ENCODE measurements at regions of chr2 and their contacts with region 1.

Region 1: GRCh38 chr2:235766278-235766677 is 272.4 kb downstream of the AGAP1 start:
- DNase-seq: no peak
- H3K4me3 ChIP-seq: no peak overlapping the region
- CTCF ChIP-seq: peak; percentile 63

Region 2: DNA sequence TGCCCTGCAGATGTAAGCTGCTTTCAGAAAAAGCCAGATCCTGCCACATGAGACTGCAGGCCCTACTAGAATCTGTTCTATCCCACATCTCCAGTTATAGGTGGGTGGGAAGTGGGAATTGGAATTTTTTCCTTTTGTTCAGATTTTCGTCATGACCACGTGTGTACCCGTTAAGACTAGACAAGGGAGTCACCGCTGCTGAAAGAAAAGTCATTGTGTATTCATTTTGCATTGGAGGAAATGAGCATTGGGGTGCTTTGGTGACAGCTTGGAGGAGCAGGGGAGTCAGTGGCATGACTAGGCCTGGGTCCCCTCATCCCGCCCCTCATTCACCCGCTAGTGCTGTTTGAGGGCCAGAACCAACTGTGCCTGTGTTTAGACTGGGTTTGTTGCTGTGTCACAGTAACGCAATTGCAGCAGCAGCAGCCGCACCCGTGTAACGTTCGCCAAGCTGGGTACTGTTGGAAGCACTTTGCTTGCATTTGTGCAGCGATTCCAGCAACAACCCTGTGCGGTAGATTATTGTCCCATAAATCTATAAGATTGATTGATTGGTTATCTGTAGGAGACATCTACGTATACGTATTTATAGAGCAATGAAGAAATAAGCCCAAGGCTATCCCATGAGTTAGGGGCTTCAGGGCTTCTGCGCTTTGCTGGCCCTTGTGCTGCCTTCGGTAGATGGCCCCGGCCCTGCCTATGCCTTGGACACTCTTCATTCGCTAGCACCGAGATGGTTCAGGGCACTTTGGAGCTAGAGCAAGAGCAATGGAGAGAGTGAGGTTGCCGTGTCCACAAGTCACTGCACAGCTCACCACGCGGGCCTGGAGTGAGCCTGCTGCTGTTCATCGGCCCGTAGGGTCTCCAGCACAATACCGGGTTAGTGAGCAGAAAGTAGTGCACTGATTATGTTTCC is 77.5 kb before region 1 on chr2:
- CTCF ChIA-PET with region 1: no interaction called
- POLR2A ChIA-PET with region 1: no interaction called
- DNase-seq: no peak
- H3K4me3 ChIP-seq: no peak overlapping the region
- CTCF ChIP-seq: no peak

Region 3: DNA sequence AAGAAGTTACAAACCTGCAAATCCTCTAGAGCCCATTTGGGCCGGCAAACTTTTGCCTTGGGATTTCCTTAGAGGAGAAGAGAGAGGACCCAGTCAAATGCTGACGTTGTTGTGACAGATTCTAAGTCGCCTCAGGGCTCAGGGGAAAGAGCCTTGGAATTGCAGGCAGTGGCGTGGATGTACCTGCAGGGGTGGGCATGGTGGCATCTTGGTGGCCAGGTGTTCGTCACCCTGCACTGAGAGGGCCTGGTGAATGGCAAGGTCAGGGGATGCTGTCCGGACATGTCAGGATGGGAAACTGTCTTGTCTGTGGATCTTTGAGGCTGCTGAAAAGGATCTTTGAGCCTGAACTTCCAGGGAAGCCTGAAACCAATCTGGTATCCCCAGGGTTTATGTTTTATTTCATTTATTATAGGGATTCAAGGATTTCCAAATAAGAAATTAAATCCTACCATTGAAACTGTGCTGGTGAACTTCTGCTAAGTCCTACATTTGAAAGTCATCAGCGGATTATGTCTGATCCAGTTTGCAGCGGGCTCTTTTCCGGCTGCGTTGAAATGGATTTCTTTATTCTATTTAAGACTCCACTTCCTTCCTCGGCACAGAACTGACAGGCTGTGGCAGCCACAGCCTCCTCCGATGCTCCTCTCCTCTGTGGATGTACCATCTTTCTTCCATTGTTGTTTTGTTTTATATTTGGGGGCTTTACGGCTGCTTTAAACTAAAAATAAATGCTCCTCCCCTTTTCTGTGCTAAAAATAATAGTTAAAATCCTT is 64.9 kb before region 1 on chr2:
- CTCF ChIA-PET with region 1: no interaction called
- POLR2A ChIA-PET with region 1: no interaction called
- DNase-seq: no peak
- H3K4me3 ChIP-seq: no peak overlapping the region
- CTCF ChIP-seq: no peak

Region 4: GRCh38 chr2:235754352-235755207 is 11.7 kb before region 1 on chr2:
- CTCF ChIA-PET with region 1: interaction called, 31 read pairs
- POLR2A ChIA-PET with region 1: no interaction called
- DNase-seq: no peak
- H3K4me3 ChIP-seq: no peak overlapping the region
- CTCF ChIP-seq: no peak

Region 5: DNA sequence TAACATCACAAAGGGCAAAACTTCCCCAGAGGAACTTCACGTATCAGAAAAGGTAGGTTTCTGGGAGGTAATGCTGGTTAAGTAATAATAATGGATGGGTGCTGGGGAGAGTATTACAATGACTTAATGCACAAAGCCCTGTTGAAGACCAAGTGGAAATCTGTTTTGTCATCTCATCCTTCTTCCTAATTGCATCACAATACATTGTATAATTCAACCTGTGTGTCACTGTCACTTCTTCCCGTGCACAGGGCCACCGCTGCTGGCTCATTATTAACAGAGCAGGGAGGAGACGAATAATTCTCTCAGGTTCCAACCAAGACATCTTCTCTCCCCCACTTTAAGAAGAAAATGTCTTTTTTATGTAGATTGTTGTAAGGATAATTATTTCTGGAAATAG is 18.5 kb after region 1 on chr2:
- CTCF ChIA-PET with region 1: interaction called, 39 read pairs
- POLR2A ChIA-PET with region 1: no interaction called
- DNase-seq: no peak
- H3K4me3 ChIP-seq: no peak overlapping the region
- CTCF ChIP-seq: no peak

Measured in AG04449 (cell line).